Activated naive CD4-positive, alpha-beta T cell treated with anti-CD3 and anti-CD28 coated beads for 36 hours (primary cell): ENCODE measurements at regions of chr5 and their contacts with region 1.

Region 1: DNA sequence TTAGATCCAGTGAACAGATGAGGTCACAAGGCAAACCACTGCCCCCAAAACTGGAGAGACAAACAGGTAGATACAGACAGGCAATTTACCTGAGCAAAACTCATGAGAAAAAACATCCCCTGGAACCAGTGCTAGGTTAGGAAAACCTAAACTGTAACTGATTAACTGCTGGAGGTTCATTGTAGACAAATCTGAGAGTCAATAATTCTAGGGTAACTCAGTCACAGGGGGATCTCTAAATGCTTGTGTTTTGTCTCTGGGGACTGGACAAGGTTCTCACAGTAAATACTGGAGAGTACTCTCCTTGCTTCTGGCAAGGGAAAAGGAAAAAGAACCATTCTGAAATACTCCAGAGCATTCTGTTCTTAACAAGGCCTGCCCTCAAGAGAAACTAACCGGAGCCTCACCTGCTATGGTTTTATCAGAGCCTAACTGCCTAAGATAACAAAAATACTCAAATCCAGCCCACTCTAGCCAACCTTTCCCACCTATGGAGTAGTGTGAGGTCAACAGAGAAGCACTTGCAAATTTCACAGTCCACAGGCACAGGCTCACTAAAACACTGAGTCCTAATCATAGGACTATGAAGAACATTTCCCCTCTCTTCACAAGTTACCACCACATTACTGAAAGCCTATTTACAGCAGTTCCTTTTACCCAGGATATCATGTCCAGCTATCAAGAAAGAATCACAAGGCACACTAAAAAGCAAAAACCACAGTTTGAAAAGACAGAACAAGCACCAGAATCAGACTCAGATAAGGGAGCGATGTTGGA is 139.9 kb upstream of the ACOT12 start:
- DNase-seq: no peak
- H3K4me3 Mint-ChIP-seq: no peak overlapping the region
- H3K27ac Mint-ChIP-seq: no peak overlapping the region
- H3K4me1 Mint-ChIP-seq: peaks cover 46% of the 10 kb centered on the region
- H3K27me3 Mint-ChIP-seq: no peaks in the 10 kb centered on the region

Region 2: DNA sequence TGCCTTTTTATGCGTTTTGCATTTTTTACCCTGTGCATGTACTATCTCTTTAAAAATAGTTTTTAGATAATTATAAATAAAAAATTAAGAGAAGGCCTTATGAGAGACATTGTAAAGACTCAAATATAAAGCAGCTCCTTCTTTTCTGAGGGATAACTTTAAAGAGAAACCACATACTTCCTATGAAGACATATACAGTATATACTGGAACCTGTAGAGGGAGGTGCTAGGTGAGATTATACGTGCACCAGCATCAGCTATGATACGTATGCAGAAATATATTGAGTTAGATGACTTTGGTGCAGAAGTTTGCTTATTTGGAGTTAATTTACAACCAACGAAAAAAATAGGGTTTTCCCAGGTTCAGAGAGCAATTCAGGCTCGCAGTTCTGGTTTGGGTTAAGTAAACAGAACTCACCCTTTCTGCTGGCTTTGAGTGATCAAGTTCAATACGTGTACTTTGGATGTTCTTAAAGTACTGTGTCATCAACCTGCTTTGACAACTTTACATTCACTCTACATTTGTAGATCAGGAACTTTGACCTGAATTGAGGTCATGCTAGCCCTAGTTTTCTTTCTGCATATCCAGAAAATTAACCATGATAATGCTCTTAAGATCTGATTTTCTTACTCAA is 180.7 kb before region 1 on chr5:
- CTCF ChIA-PET with region 1: no interaction called
- intact Hi-C with region 1: no loop called
- DNase-seq: no peak
- H3K4me3 Mint-ChIP-seq: no peak overlapping the region
- H3K27ac Mint-ChIP-seq: no peak overlapping the region
- H3K4me1 Mint-ChIP-seq: no peaks in the 10 kb centered on the region
- H3K27me3 Mint-ChIP-seq: no peaks in the 10 kb centered on the region

Region 3: DNA sequence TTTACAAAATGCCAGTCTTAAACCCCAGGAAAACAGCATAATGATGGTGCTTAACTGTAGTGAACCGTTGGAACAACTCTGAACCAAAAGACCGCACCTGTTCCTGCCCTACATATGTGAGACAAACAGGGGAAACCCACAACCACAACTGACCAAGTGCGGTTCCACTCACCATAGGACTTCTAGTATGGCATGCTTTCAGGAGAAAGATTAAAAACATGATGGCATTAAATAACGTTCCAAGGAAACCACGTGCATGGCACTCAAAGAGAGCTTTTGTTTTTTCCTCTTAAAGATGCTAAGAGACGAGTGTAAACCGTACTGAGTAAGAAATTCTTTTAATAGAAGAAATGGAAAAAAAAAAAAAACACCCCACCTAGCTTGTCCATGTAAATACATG is 97.3 kb after region 1 on chr5:
- CTCF ChIA-PET with region 1: interaction called, 5 read pairs
- intact Hi-C with region 1: loop called (anchors 5 kb)
- DNase-seq: peak; percentile 51
- H3K4me3 Mint-ChIP-seq: no peak overlapping the region
- H3K27ac Mint-ChIP-seq: no peak overlapping the region
- H3K4me1 Mint-ChIP-seq: peaks cover 14% of the 10 kb centered on the region
- H3K27me3 Mint-ChIP-seq: no peaks in the 10 kb centered on the region

Region 4: DNA sequence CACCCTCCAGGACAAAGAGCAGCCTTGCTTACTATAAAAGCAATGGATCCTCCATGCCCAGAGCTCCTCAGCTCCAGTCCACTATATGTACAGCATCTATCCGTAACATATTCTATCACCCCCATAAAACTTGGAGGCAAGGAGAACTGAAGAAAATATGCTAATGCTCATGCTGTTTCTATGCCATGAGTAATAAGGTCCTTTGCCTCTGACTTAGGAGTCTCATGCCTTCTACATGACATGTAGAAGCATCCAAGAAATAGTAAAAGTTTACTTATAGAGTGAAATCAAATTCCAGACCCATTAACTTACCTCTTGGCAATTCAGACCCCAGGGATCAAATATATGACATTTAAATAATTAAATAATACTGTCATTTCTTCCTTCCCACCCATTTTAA is 183.4 kb after region 1 on chr5:
- CTCF ChIA-PET with region 1: no interaction called
- intact Hi-C with region 1: loop called (anchors 2 kb)
- DNase-seq: no peak
- H3K4me3 Mint-ChIP-seq: no peak overlapping the region
- H3K27ac Mint-ChIP-seq: no peak overlapping the region
- H3K4me1 Mint-ChIP-seq: peaks cover 57% of the 10 kb centered on the region
- H3K27me3 Mint-ChIP-seq: no peaks in the 10 kb centered on the region